Cardiac septum (tissue), 1 donor: ENCODE measurements at regions of chr2 and their contacts with region 1.

Region 1: GRCh38 chr2:226799181-226799975 is at the start of gene IRS1:
- DNase-seq: peak; percentile 82
- total RNA-seq, gene IRS1: 14.0 TPM

Region 2: GRCh38 chr2:225889446-225889850 is 909.9 kb before region 1 on chr2:
- intact Hi-C with region 1: loop called (anchors 2 kb)
- DNase-seq: no peak

Region 3: DNA sequence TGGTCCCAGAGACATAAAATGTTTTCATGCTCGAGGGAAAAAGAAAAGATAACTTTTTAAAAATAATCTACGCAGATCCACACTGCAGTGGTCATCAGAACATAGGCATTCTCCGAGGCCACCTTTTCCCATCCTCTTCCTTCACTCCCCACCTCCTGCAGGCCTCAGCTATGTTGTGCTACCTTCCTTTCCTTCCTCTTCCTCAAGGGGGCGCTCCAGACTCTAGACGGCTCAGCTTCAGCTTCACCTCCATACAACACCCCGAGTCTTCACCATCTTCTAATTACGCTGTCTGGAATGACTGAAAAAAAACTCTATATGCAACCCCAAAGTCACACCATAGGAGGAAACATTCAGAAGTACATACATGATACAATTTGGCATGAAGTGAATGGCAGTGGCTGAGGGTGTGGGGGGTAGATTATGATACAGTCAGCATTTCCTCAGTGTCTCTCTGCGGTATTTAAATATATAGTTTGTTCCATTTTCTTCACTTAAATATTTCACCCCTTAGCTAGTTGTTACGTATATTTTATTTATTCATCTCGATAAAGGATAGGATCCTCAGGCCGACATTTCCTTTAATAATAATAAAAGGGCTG is 583.4 kb before region 1 on chr2:
- intact Hi-C with region 1: loop called (anchors 2 kb)
- DNase-seq: no peak

Region 4: GRCh38 chr2:226618875-226619605 is 180.3 kb before region 1 on chr2:
- intact Hi-C with region 1: no loop called
- DNase-seq: no peak

Region 5: GRCh38 chr2:226631671-226632070 is 167.7 kb before region 1 on chr2:
- intact Hi-C with region 1: no loop called
- DNase-seq: no peak

Region 6: DNA sequence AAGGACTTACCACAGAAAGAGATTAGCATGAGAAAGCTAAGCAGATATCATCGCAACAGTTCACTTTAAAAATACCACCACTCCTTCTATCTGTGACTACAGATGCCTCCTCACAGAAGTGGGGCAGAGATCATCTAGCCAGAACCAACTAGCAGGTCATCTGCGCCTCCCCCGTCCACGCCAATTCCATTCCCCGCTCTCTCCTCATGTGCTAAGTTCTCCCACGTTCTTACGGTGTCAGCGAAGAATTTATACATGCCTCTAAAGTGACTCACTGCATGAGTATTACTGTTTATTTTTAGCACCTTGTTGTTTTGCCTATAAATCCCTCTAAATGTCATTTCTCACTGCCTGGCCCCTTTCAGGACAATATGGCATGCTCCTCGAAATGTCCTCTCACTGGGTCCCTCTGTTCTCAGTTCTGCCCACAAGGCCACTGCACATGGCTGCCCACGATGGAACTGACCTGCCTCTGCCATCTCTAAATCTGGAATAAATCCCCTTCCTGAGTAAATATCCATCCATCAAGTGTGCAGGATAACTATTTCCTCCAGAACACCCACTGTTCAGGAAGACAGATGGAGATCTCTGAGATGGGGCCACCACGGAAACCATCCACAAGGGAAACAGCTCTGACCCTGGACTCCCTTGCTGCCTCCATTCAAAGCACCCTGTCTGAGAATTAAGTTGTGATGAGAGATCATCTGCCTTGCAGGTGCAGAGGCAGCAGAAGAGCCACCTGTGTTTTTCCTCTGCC is 137.4 kb before region 1 on chr2:
- intact Hi-C with region 1: loop called (anchors 5 kb)
- DNase-seq: no peak

Region 7: GRCh38 chr2:226916669-226917068 is 117.3 kb after region 1 on chr2:
- intact Hi-C with region 1: no loop called
- DNase-seq: no peak

Region 8: GRCh38 chr2:226984750-226985582 is 185.6 kb after region 1 on chr2:
- intact Hi-C with region 1: loop called (anchors 5 kb)
- DNase-seq: no peak